Mammary epithelial cell (primary cell): ENCODE measurements at regions of chr4 and their contacts with region 1.

Region 1: DNA sequence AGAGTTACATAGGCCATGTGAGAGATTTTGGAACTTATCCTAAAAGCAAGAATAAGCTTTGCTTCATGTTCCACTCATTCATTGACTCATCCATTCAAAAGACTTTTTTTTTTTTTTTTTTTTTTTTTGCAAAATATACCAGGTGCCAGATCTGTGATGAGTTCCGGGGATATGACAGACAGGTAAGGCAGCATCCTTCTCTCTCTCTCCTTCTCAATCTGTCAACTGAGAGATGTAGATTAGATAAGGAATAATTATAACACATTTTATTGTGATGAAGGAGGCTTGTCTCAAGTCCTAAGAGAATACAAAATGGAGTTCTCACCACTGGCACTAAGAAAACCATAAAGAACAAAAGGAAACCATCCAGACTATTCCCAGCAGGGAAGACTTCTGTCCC is 190.2 kb upstream of the CPEB2 start:
- DNase-seq: no peak
- H3K4me3 ChIP-seq: no peak overlapping the region
- H3K27ac ChIP-seq: no peak overlapping the region
- H3K4me1 ChIP-seq: no peaks in the 10 kb centered on the region
- H3K27me3 ChIP-seq: no peaks in the 10 kb centered on the region
- CTCF ChIP-seq: no peak

Region 2: GRCh38 chr4:14827111-14827510 is 15.0 kb after region 1 on chr4:
- CTCF ChIA-PET with region 1: no interaction called
- dilution Hi-C with region 1: no loop called
- in situ Hi-C with region 1: no loop called
- intact Hi-C with region 1: no loop called
- DNase-seq: no peak
- H3K4me3 ChIP-seq: no peak overlapping the region
- H3K27ac ChIP-seq: no peak overlapping the region
- H3K4me1 ChIP-seq: no peaks in the 10 kb centered on the region
- H3K27me3 ChIP-seq: no peaks in the 10 kb centered on the region
- CTCF ChIP-seq: no peak

Region 3: GRCh38 chr4:15197005-15197404 is 384.9 kb after region 1 on chr4:
- CTCF ChIA-PET with region 1: interaction called, 28 read pairs
- dilution Hi-C with region 1: no loop called
- in situ Hi-C with region 1: no loop called
- intact Hi-C with region 1: no loop called
- DNase-seq: peak; percentile 28
- H3K4me3 ChIP-seq: no peak overlapping the region
- H3K27ac ChIP-seq: no peak overlapping the region
- H3K4me1 ChIP-seq: no peaks in the 10 kb centered on the region
- H3K27me3 ChIP-seq: no peaks in the 10 kb centered on the region
- CTCF ChIP-seq: peak; percentile 21 to 45